CD8-positive, alpha-beta T cell (primary cell): ENCODE measurements at regions of chr18 and their contacts with region 1.

Region 1: DNA sequence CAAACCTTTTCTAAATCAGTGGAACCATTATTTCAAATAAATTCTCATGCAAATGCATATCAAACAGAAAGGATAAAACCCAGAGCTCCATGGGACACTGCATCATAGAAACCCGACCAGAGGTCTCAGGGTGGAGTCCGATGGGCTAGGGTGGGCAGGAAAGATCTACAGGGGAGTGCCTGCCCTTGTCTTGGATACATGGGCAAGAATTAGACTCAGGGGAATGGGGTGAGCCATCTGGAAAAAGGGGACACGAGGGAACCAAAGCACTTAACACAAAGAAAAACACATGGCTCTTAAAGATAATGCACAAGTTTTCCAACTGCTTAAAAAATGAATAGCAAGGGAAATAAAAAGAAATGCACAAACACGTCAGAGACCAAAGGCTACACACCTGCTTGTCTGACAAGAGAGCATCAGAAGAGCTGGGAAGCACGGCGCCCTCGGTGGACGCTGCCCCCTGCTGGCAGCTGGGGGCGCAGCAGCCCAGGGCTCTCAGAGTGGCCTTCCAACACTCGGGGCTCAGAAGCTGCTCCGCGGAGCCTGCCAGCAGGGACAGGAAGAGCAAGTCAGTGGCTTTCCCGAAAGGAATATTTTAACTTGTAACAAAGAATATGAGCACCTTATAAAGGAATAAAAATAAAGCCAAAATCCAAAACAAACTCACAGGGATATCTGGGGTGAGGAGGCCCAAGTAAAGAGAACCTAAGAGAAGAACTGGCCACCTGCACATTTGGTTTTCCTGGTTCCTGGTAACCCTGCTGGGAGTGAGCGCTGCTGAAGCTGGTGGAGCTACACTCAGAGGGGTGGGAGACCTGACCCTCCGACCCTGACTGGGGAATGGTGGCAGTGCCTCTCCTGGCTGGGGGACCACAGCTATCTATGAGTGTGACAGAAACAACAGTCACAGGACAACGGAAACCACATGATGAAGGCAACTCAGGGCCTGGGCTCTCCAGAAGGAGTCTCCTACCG is 54.5 kb downstream of the SIGLEC15 start:
- DNase-seq: peak; percentile 53 to 86 (median 69)
- ATAC-seq: peak; percentile 98
- H3K4me3 ChIP-seq: no peak overlapping the region
- H3K4me3 Mint-ChIP-seq: no peak overlapping the region
- H3K27ac ChIP-seq: no peak overlapping the region
- H3K27ac Mint-ChIP-seq: peak overlapping the region; percentile 69
- H3K4me1 ChIP-seq: peaks cover 7% of the 10 kb centered on the region
- H3K4me1 Mint-ChIP-seq: peaks cover 15% of the 10 kb centered on the region
- H3K27me3 ChIP-seq: no peaks in the 10 kb centered on the region
- H3K27me3 Mint-ChIP-seq: no peaks in the 10 kb centered on the region
- CTCF ChIP-seq: peak; percentile 99

Region 2: GRCh38 chr18:45621061-45621511 is 258.9 kb before region 1 on chr18:
- CTCF ChIA-PET with region 1: interaction called, 23 read pairs
- POLR2A ChIA-PET with region 1: interaction called, 3 read pairs
- intact Hi-C with region 1: loop called (anchors 1 kb)
- DNase-seq: peak in 7 of 9 experiments; percentile 10 to 66 (median 39)
- ATAC-seq: peak; percentile 56
- H3K4me3 ChIP-seq: no peak overlapping the region
- H3K4me3 Mint-ChIP-seq: no peak overlapping the region
- H3K27ac ChIP-seq: no peak overlapping the region
- H3K27ac Mint-ChIP-seq: no peak overlapping the region
- H3K4me1 ChIP-seq: no peaks in the 10 kb centered on the region
- H3K4me1 Mint-ChIP-seq: no peaks in the 10 kb centered on the region
- H3K27me3 ChIP-seq: no peaks in the 10 kb centered on the region
- H3K27me3 Mint-ChIP-seq: peaks cover 16% of the 10 kb centered on the region
- CTCF ChIP-seq: peak; percentile 92

Region 3: DNA sequence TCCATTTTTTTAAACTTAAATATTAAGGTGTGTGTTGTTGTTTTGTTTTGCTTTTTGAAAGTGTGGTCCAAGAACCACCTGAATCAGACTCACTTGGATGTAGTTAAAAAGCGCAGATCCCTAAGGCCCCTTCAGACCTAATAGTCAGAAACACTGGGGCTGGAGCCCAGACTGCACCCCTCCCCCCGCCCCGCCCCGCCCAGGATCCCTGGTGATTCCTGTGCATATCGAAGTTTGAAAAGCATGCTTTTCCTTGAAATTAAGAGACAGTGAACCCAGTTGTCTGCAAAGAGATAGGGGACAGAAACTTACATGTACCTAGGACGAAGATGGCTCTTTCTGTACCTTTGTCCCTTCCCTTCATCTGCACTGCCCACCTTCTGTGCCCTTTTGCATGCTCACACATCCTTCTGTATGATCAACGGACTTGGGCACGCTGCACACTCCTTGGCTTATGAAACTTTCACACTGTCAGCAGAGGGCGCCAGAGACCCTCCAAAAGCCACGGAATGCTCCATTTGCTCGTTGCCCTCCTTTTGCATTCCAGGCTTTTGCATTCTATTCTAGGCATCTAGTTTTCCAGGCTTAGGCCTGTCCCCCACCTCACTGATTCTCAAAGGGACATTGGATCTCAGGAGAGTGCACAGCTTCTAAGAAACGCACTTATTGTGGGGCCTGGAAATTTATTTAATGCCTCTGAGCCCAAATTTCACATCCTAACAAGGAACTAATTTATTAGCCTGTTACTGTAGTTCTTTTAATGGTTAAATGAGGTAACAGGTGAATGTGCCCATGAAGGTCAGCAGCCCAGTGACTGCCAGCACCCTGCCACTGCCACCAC is 188.8 kb before region 1 on chr18:
- CTCF ChIA-PET with region 1: interaction called, 72 read pairs
- POLR2A ChIA-PET with region 1: interaction called, 3 read pairs
- intact Hi-C with region 1: loop called (anchors 1 kb)
- DNase-seq: peak; percentile 58 to 88 (median 82)
- ATAC-seq: no peak
- H3K4me3 ChIP-seq: no peak overlapping the region
- H3K4me3 Mint-ChIP-seq: peak overlapping the region; percentile 35
- H3K27ac ChIP-seq: no peak overlapping the region
- H3K27ac Mint-ChIP-seq: no peak overlapping the region
- H3K4me1 ChIP-seq: peaks cover 49% of the 10 kb centered on the region
- H3K4me1 Mint-ChIP-seq: peaks cover 47% of the 10 kb centered on the region
- H3K27me3 ChIP-seq: no peaks in the 10 kb centered on the region
- H3K27me3 Mint-ChIP-seq: peaks cover 2% of the 10 kb centered on the region
- CTCF ChIP-seq: peak; percentile 81

Region 4: DNA sequence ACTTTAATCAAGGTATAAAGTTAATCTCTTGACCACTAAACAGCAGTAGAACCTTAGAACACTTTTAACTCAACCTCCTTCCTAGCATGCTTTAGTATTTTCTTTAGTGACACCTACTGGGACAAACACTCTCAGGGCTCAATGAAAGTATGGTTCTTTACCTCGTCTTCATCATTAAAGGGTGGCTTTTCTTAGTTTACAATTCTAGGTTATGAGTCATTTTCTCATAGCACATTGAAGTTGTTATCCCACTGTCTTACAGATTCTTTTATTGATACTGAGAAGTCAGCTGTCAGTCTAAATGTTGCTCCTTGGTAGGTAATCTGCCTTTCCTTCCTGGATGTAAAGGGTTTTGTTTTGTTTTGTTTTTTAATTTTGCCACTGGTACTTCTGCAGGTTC is 16.5 kb before region 1 on chr18:
- CTCF ChIA-PET with region 1: interaction called, 24 read pairs
- POLR2A ChIA-PET with region 1: interaction called, 3 read pairs
- intact Hi-C with region 1: no loop called
- DNase-seq: no peak
- ATAC-seq: no peak
- H3K4me3 ChIP-seq: no peak overlapping the region
- H3K4me3 Mint-ChIP-seq: no peak overlapping the region
- H3K27ac ChIP-seq: no peak overlapping the region
- H3K27ac Mint-ChIP-seq: no peak overlapping the region
- H3K4me1 ChIP-seq: no peaks in the 10 kb centered on the region
- H3K4me1 Mint-ChIP-seq: no peaks in the 10 kb centered on the region
- H3K27me3 ChIP-seq: no peaks in the 10 kb centered on the region
- H3K27me3 Mint-ChIP-seq: no peaks in the 10 kb centered on the region
- CTCF ChIP-seq: no peak

Region 5: GRCh38 chr18:45910405-45911023 is 30.5 kb after region 1 on chr18:
- CTCF ChIA-PET with region 1: interaction called, 12 read pairs
- POLR2A ChIA-PET with region 1: interaction called, 3 read pairs
- intact Hi-C with region 1: no loop called
- DNase-seq: peak; percentile 35 to 73 (median 63)
- ATAC-seq: peak; percentile 84
- H3K4me3 ChIP-seq: no peak overlapping the region
- H3K4me3 Mint-ChIP-seq: no peak overlapping the region
- H3K27ac ChIP-seq: no peak overlapping the region
- H3K27ac Mint-ChIP-seq: no peak overlapping the region
- H3K4me1 ChIP-seq: no peaks in the 10 kb centered on the region
- H3K4me1 Mint-ChIP-seq: no peaks in the 10 kb centered on the region
- H3K27me3 ChIP-seq: no peaks in the 10 kb centered on the region
- H3K27me3 Mint-ChIP-seq: no peaks in the 10 kb centered on the region
- CTCF ChIP-seq: peak; percentile 71

Region 6: DNA sequence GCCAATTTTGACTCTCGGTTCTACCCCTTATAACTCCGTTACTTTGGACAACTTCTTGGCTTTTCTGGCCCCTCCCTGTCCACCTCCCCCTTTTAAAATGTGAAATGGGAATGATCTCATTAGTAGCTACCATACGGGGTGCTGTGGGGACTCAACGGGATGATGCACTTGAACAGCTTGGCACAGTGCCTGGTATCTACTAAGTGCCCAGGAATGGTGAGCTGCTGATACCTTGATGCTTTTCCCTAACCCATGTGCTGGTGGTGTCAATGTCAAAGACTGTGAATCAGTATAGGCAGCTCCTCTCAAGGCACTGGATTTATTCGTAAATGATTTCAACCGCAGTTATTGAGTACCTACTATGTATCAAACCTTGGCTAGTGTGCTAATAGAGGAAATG is 572.9 kb after region 1 on chr18:
- CTCF ChIA-PET with region 1: no interaction called
- POLR2A ChIA-PET with region 1: no interaction called
- intact Hi-C with region 1: no loop called
- DNase-seq: no peak
- ATAC-seq: no peak
- H3K4me3 ChIP-seq: no peak overlapping the region
- H3K4me3 Mint-ChIP-seq: no peak overlapping the region
- H3K27ac ChIP-seq: no peak overlapping the region
- H3K27ac Mint-ChIP-seq: no peak overlapping the region
- H3K4me1 ChIP-seq: no peaks in the 10 kb centered on the region
- H3K4me1 Mint-ChIP-seq: no peaks in the 10 kb centered on the region
- H3K27me3 ChIP-seq: no peaks in the 10 kb centered on the region
- H3K27me3 Mint-ChIP-seq: peaks cover 7% of the 10 kb centered on the region
- CTCF ChIP-seq: no peak